SK-N-SH (cell line): ENCODE measurements at regions of chr1 and their contacts with region 1.

Region 1: DNA sequence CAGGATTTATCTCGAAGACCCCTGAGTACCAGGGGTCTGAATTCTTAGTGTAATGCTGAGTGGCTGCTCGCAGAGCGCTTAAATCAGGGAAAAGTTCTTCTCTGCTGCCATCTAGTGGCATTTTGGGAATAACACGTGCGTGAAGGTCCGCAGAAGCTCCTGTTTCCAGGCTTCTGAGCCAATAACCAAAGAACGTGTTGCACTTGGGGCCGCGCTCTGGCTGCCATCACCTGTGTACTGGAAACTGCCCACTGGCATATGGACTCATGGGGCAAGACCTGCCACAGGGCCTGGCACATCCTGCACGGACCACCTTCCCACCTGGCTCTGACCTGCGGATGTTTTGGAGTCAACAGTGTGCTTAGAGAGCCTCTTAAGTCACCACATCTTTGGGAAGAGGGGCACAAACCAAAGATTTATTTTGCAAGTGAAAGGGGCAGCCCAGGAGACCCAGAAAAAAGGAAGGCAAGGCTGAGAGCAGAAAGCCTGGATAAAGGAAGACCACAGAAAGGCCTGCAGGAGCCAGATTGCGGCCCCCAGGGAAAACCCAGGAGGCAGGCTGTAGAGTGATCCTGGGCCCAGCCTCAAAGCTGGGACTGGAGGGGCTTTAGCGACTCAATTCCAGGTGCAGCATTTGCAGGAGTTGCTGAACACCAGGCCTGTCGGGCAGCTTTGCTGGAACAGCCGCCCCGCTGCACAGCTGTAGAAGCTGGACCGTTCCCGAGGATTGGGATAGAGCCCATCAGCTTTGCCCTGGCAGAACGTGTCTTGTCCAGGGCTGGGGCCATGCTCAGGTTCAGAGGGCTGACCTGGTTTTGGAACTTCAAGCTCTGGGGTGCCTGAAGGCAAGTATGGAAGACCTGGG is 13.0 kb downstream of the CHIT1 start:
- DNase-seq: peak; percentile 74
- H3K4me3 ChIP-seq: no peak overlapping the region; a peak in 1 of 4 replicates
- H3K27ac ChIP-seq: no peak overlapping the region
- H3K4me1 ChIP-seq: peaks cover 0 to 2% of the 10 kb centered on the region in 2 experiments; a peak in 1 of 4 replicates
- H3K27me3 ChIP-seq: peaks cover 18% of the 10 kb centered on the region
- CTCF ChIP-seq: peak; percentile 79
- EP300 ChIP-seq: no peak
- RAD21 ChIP-seq: peak; percentile 94

Region 2: DNA sequence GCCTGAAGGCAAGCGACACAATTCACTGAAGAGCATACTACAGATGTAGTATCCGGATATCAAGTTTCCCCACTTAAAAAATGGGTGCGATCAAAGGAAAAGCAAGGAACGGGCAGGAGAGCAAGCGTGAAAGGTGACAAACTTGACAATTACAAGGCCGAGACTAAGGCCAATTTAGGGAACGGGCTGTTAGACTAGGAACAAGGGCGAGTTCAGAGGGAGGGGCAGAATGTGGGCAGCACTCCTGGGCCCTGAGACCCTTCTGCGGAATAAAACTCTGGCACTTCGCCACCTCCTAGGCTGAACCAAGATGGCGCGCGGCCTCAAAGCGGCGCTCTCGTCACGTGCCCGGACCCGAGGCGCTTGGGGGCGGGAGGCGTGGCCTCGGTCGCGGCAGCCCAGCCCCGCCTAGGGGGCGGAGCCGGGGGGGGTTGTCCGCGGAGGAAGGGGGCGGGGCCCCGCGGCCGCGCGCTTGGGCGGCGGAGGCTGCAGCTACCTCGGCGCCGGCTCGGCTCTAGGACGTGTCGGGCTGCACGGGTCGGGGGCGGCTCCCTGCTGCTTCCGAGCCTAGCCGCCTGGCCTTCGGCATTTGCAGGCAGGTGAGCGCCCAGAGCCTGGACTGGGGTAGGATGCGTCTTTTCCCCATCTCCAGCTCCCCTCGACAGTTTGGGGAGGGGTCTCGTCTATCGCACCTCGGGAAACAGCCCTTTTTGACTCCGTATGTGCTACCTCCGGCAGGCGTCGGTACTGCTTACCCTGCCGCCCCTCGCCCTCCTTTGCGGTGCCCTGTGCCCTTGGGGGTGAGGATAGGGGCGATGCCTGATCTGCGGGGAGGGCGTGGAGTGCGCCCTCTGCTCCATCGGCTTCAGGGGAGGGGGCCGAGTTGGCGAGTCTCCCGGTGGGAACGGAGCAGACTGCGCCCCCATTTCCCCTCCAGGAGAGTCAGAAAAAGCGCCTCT is 190.2 kb before region 1 on chr1 and contains the start of gene PPFIA4:
- CTCF ChIA-PET with region 1: interaction called, 35 read pairs
- POLR2A ChIA-PET with region 1: no interaction called
- DNase-seq: peak; percentile 99
- H3K4me3 ChIP-seq: peak within 1 kb of the TSS; percentile 70 to 74
- H3K27ac ChIP-seq: peak within 1 kb of the TSS in 1 of 2 experiments; percentile 58; a peak in 1 of 4 replicates
- H3K4me1 ChIP-seq: peaks cover 0 to 34% of the 10 kb centered on the region in 2 experiments; a peak in 1 of 4 replicates
- H3K27me3 ChIP-seq: no peaks in the 10 kb centered on the region
- CTCF ChIP-seq: no peak
- EP300 ChIP-seq: 0 out of 4 replicates have a peak, but pooled peaks of 1 of the 2 experiments have one; percentile 16
- RAD21 ChIP-seq: peak; percentile 45
- polyA plus RNA-seq, gene PPFIA4: 4.4 and 5.5 TPM in 2 replicates

Region 3: GRCh38 chr1:203057911-203058675 is 158.4 kb before region 1 on chr1:
- CTCF ChIA-PET with region 1: interaction called, 64 read pairs
- POLR2A ChIA-PET with region 1: no interaction called
- DNase-seq: peak; percentile 83
- H3K4me3 ChIP-seq: no peak overlapping the region
- H3K27ac ChIP-seq: no peak overlapping the region
- H3K4me1 ChIP-seq: peaks cover 0 to 22% of the 10 kb centered on the region in 2 experiments; a peak in 1 of 4 replicates
- H3K27me3 ChIP-seq: no peaks in the 10 kb centered on the region
- CTCF ChIP-seq: no peak
- EP300 ChIP-seq: no peak
- RAD21 ChIP-seq: no peak

Region 4: DNA sequence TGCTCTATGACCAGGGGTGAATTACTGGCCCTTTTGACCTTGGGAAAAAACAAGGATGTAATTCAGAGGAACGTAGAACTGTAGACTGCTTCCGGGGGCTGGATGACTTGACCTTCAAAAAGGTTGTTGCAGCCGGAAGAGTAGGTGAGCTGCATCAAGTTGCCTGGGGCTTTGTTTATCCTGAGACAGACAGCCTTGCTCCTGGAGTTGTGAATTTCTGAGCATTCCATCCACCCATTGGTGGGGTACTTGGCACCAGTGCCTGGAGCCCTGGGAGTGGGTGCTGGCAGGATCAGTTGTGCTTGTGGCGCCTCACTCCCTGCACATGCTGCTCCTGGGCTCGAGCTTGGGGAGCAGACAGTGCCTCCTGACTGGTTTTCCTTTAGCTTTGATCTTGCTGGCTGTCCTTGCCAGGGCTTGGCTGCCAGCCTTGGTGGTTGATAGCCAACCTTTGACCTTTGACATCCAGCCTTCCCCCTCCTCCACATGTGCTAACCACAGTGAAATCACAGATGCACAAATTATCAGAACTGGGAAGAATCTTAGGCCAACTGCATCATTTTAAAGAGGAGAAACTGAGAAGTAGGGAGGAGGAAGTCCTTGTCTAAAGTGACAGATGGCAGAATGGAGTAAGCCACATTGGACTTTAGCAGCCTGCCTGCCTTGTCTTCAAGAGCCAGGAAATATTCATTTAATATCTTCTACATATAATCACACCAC is 114.4 kb before region 1 on chr1:
- CTCF ChIA-PET with region 1: interaction called, 11 read pairs
- POLR2A ChIA-PET with region 1: no interaction called
- DNase-seq: no peak
- H3K4me3 ChIP-seq: no peak overlapping the region
- H3K27ac ChIP-seq: no peak overlapping the region
- H3K4me1 ChIP-seq: no peaks in the 10 kb centered on the region; a peak in 1 of 4 replicates
- H3K27me3 ChIP-seq: no peaks in the 10 kb centered on the region; the same call in 1 of the 2 replicates
- CTCF ChIP-seq: no peak
- EP300 ChIP-seq: no peak
- RAD21 ChIP-seq: no peak

Region 5: DNA sequence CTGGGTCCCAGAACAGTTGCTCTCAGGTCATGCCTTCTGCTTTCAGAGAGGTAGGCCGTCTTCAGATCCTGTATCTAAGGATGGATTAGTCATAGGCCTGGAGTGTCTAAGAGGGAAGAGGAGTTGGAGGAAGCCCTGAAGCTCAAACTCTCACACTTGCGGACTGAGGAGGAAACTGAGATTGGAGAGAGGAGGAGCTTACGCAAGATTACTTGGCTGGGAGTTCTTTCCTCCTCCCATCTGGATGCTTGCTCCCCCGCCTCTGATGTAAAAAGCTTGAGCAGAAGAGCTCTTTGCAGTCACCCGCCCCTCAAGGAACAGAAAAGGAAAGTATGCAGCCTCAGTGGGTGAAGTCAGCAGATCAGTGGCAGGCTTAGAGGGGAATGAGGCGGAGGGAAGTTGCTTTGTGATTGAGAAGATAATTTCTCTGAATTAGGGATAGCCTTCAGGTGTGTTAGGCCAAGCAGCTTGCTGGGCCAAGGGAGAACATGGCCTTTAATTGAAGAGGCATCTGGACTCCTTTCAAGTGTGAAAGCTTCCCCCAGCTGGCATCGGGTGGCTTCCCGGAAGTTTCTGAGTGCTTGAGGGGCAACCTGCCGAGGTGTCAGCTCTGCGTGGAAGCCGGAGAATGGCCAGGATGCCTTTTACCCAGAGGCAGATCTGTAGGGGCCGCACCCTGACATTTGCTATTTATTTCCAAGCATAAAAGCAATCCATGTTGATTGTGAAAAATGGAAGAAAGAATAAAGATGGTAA is 82.4 kb before region 1 on chr1:
- CTCF ChIA-PET with region 1: interaction called, 602 read pairs
- POLR2A ChIA-PET with region 1: no interaction called
- DNase-seq: no peak
- H3K4me3 ChIP-seq: no peak overlapping the region
- H3K27ac ChIP-seq: no peak overlapping the region
- H3K4me1 ChIP-seq: peaks cover 5 to 38% of the 10 kb centered on the region in 2 experiments; a peak in 2 of 4 replicates
- H3K27me3 ChIP-seq: no peaks in the 10 kb centered on the region
- CTCF ChIP-seq: no peak
- EP300 ChIP-seq: no peak
- RAD21 ChIP-seq: no peak

Region 6: DNA sequence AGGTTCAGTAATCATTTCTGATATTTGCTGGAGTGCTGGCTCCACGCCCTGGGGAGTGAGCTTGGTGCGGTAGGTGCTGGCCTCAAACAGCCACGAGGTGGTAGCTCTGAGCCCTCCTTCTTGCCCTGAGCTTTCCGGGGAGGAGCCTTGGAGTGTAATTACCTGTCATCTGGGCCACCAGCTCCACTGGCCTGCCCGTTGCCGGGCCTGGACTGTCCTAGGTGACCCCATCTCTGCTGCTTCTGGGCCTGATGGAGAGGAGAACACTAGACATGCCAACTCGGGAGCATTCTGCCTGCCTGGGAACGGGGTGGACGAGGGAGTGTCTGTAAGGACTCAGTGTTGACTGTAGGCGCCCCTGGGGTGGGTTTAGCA is 50.0 kb before region 1 on chr1:
- CTCF ChIA-PET with region 1: interaction called, 25 read pairs
- POLR2A ChIA-PET with region 1: no interaction called
- DNase-seq: no peak
- H3K4me3 ChIP-seq: no peak overlapping the region
- H3K27ac ChIP-seq: no peak overlapping the region
- H3K4me1 ChIP-seq: no peaks in the 10 kb centered on the region
- H3K27me3 ChIP-seq: no peaks in the 10 kb centered on the region
- CTCF ChIP-seq: no peak
- EP300 ChIP-seq: no peak
- RAD21 ChIP-seq: no peak

Region 7: GRCh38 chr1:203202431-203203245 is 13.9 kb before region 1 on chr1:
- CTCF ChIA-PET with region 1: interaction called, 29 read pairs
- POLR2A ChIA-PET with region 1: no interaction called
- DNase-seq: no peak
- H3K4me3 ChIP-seq: no peak overlapping the region
- H3K27ac ChIP-seq: no peak overlapping the region
- H3K4me1 ChIP-seq: no peaks in the 10 kb centered on the region; a peak in 1 of 4 replicates
- H3K27me3 ChIP-seq: peaks cover 9% of the 10 kb centered on the region; the same call in 1 of the 2 replicates
- CTCF ChIP-seq: no peak
- EP300 ChIP-seq: no peak
- RAD21 ChIP-seq: no peak